Activated CD8-positive, alpha-beta T cell treated with anti-CD3 and anti-CD28 coated beads, Interleukin-2, amount 10 ng/mL, durations not matched to agents 7 days and 5 days (primary cell): ENCODE measurements at regions of chr22 and their contacts with region 1.

Region 1: DNA sequence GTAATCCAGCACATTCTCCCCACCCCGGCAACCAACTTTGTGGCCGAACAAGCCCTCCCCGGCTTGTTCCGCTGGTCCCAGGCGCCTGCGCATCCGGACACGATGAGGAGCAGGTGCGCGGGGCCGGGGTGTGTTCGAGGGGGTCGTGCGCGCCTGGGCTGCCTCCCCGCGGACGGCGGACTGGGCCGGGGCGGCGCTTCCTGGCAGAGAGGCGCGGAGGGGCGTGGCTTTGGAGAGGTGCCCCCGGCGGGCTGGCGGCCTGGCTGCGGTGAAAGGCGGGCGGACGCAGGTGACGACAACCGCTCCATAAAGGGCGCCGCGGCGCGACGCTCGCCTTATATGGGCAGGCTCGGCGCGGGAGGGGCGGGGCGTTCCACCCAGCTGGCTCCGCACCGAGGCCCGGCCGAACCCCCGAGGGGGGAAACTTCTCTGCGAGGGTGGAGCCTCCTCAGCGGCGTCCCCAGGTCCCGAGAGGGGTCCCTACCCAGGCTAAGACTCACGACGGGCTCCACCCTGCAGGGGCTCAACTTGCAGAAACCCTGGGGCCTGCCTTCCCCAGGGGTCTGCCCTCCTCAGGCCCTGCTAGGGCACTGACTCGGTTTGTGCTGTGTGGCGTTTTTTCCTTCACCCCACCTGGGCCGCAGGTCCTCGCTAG is 26.4 kb downstream of the TXN2 start:
- DNase-seq: peak; percentile 98
- ATAC-seq: peak; percentile 78
- H3K4me3 Mint-ChIP-seq: peak overlapping the region; percentile 70
- H3K27ac Mint-ChIP-seq: peak overlapping the region; percentile 79
- H3K4me1 Mint-ChIP-seq: peaks cover 62% of the 10 kb centered on the region
- H3K27me3 Mint-ChIP-seq: no peaks in the 10 kb centered on the region

Region 2: GRCh38 chr22:36405671-36406538 is 49.1 kb before region 1 on chr22:
- CTCF ChIA-PET with region 1: interaction called, 14 read pairs
- POLR2A ChIA-PET with region 1: interaction called, 3 read pairs
- DNase-seq: peak; percentile 77
- ATAC-seq: peak; percentile 72
- H3K4me3 Mint-ChIP-seq: peak overlapping the region; percentile 40
- H3K27ac Mint-ChIP-seq: peak overlapping the region; percentile 93
- H3K4me1 Mint-ChIP-seq: peaks cover 51% of the 10 kb centered on the region
- H3K27me3 Mint-ChIP-seq: no peaks in the 10 kb centered on the region

Region 3: GRCh38 chr22:36425977-36426523 is 29.0 kb before region 1 on chr22:
- CTCF ChIA-PET with region 1: no interaction called
- POLR2A ChIA-PET with region 1: no interaction called
- DNase-seq: no peak
- ATAC-seq: no peak
- H3K4me3 Mint-ChIP-seq: no peak overlapping the region
- H3K27ac Mint-ChIP-seq: peak overlapping the region; percentile 65
- H3K4me1 Mint-ChIP-seq: peaks cover 30% of the 10 kb centered on the region
- H3K27me3 Mint-ChIP-seq: no peaks in the 10 kb centered on the region